ENCODE measurements at regions of chr7 and their contacts with region 1.

Region 1: DNA sequence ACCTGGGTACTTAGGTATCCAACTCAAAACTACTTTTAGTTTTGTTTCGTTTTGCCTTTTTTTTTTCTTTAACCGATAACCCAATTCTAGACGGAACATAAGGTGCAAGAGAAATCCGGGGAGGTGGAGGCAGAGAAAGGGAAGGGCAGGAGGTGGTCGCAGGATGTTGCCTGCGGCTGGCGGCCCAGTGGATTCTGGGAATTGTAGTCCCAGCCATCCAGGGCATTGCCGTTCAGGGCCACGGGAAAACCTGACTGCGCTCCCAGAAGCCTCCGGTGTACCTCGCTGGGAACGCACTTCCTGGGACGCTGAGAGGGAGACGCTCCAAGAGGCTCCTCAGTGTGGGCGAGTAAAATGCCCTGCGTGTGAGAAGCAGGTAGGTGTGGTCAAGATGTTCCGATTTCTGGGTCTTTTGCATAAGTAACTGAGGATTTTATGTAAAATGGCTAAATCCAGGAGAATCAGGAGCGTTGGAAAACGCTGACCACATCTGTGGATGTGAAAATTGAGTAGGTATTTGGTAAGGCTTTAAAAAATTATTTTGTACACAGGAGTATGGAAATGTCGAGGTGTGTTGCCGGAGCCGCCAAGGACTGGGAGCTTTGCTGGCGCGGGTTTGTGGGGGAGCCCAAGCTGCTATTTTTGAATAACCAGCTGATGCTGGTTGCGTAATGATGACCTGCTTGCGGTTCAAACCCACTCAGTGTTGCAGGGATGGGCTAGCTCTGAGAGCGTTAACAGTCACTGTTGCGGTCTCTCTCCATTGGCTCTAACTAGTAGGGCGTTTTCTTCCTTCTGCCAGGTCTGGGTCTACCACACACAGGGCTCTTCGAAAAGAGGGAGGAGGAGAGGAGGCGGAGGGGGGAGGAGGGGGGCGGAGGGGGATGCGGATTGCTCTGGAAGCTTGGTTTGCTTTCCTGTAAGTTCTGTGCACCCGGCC is at the start of gene CLDN12:
- DNase-seq: peak; percentile 90 to 94 (median 92)
- ATAC-seq: peak; percentile 97 to 98
- H3K4me3 ChIP-seq: peak within 1 kb of the TSS; percentile 98
- H3K27ac ChIP-seq: peak within 1 kb of the TSS; percentile 99
- H3K4me1 ChIP-seq: peaks cover 6% of the 10 kb centered on the region
- H3K27me3 ChIP-seq: no peaks in the 10 kb centered on the region
- total RNA-seq, gene CLDN12: 34.9 to 46.1 (median 39.7) TPM

Region 2: GRCh38 chr7:90288154-90288553 is 115.3 kb before region 1 on chr7:
- intact Hi-C with region 1: no loop called
- DNase-seq: no peak
- ATAC-seq: no peak
- H3K4me3 ChIP-seq: no peak overlapping the region
- H3K27ac ChIP-seq: no peak overlapping the region
- H3K4me1 ChIP-seq: no peaks in the 10 kb centered on the region
- H3K27me3 ChIP-seq: no peaks in the 10 kb centered on the region

Region 3: GRCh38 chr7:90346336-90347125 is 56.9 kb before region 1 on chr7 and contains the start of gene GTPBP10:
- intact Hi-C with region 1: loop called in 1 of 4 experiments (anchors 5 kb)
- DNase-seq: peak; percentile 96 to 97 (median 97)
- ATAC-seq: peak; percentile 100
- H3K4me3 ChIP-seq: peak within 1 kb of the TSS; percentile 88
- H3K27ac ChIP-seq: peak within 1 kb of the TSS; percentile 69
- H3K4me1 ChIP-seq: no peaks in the 10 kb centered on the region
- H3K27me3 ChIP-seq: no peaks in the 10 kb centered on the region
- total RNA-seq, gene GTPBP10: 15.3 to 25.9 (median 20.3) TPM

Measured in right cardiac atrium (tissue), 5 donors.